ENCODE measurements at regions of chr7 and their contacts with region 1.

Region 1: GRCh38 chr7:7103343-7104313 is 78.7 kb upstream of the C1GALT1 start:
- DNase-seq: peak; percentile 50
- ATAC-seq: peak; percentile 84
- H3K4me3 ChIP-seq: peak overlapping the region in 1 of 2 experiments; percentile 44; a peak in 2 of 4 replicates
- H3K27ac ChIP-seq: no peak overlapping the region; the same call in 1 of the 2 replicates
- H3K4me1 ChIP-seq: peaks cover 5% of the 10 kb centered on the region
- H3K27me3 ChIP-seq: 0 out of 2 replicates have a peak, but pooled peaks cover 3% of the 10 kb centered on the region
- CTCF ChIP-seq: peak; percentile 77

Region 2: DNA sequence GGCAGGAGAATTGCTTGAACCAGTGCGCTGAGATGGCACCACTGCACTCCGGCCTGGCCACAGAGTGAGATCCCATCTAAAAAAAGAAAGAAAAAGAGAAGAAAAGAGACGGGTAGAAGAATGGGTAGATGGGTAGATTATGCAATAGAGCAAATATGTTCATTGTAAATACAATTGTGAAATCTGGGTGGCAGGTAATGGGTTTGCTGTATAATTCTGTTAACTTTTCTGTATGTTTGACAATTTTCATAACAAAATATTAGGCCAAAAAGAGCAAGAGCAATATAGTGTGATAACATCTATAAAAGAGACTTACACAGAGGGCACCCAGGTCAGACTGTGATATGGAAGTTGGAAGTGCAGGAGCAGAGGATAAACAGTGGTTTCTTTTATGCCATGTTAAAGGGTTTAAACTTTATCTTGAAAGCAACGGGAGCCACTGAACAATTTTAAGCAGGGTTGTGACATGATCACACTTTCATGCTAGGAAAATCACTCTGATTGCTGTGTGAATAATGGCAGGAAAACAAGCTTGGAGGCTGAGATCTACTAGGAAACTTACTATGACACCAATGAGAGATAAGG is 438.7 kb after region 1 on chr7:
- CTCF ChIA-PET with region 1: interaction called, 10 read pairs
- POLR2A ChIA-PET with region 1: no interaction called
- in situ Hi-C with region 1: no loop called
- intact Hi-C with region 1: loop called (anchors 2 kb)
- DNase-seq: no peak
- ATAC-seq: 0 out of 2 replicates have a peak, but pooled peaks have one; percentile 38
- H3K4me3 ChIP-seq: no peak overlapping the region
- H3K27ac ChIP-seq: no peak overlapping the region
- H3K4me1 ChIP-seq: no peaks in the 10 kb centered on the region
- H3K27me3 ChIP-seq: peaks cover 10% of the 10 kb centered on the region
- CTCF ChIP-seq: no peak

Measured in Panc1 (cell line).